ENCODE measurements at regions of chr5 and their contacts with region 1.

Region 1: DNA sequence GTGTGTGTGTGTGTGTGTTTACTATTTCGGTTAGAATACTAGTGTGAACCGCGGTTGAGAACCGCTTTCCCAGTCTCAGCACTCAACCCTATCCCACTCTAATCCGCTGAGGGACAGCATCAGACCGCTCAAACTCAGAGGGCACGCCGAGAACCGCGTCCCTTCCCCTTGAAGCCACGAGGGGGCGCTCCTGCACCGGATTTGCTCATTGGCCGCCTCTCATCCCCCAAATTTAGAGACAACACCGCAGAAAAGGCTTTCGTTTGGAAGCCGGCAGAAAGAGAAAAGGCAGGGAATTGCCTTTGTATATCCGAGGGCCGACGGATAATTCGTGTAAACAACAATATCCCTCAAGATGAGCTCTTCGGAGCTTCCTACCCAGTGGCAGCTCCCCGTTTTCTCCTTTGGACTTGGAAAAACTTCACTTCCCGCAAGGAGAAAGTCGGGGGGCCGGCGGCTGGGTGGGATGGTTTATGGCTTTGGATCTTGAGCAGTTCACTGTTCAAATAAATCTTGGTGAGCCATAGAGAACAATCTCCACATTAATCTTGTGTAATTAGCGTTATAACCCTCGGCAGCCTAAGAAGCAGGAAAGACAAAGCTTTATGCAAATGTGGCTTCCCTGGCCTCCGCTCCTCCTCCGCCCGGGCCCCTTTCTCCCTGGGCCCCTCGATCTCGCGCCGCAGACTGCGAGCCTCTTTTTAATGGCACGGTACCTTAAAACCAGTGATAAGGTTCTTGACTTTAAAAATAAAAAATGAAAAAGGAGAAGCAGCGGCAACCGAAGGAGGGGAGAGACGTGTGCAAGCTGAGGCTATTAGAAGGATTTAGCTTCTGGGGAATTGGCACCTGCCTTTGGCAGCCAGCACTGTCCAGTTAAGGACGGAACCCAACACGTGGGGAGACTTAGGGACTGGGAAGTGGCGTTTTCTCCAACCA is 296.8 kb downstream of the PARP8 start:
- DNase-seq: peak; percentile 69 to 88
- ATAC-seq: peak; percentile 81
- H3K4me3 ChIP-seq: peak overlapping the region; percentile 18 to 53
- H3K27ac ChIP-seq: no peak overlapping the region
- H3K4me1 ChIP-seq: no peaks in the 10 kb centered on the region
- H3K27me3 ChIP-seq: no peaks in the 10 kb centered on the region

Region 2: DNA sequence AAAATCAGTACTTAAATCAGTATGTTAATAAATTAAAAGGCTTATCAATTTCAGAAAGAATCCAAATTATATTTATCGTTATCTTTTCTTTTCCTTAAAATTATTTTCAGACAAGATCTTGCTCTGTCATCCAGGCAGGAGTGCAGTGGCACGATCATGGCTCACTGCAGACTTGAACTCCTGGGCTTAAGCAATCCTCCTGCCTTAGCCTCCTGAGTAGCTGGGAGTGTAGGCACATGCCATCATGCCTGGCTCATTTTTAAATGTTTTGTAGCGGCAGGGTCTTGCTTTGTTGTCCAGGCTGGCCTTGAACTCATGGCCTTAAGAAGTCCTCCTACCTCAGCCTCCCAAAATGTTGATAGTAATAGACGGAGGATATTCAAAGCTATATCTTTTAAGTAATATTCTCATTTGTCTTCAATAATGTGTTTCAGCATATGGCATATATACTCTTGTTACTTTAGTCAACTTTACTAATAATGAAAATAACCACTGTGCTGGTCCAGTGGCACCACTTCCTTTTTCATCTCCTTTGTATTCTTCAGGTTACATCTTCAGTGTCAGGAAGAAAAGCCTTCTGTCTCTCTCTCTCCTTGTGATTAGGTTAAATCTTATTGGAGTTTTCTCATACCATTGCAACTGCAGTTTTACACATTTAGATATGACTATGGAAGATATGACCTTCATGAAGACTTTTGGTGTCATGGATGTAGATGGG is 265.6 kb before region 1 on chr5:
- intact Hi-C with region 1: no loop called
- DNase-seq: no peak
- ATAC-seq: no peak
- H3K4me3 ChIP-seq: no peak overlapping the region
- H3K27ac ChIP-seq: no peak overlapping the region
- H3K4me1 ChIP-seq: no peaks in the 10 kb centered on the region
- H3K27me3 ChIP-seq: no peaks in the 10 kb centered on the region

Region 3: GRCh38 chr5:52007230-52007858 is 1044.1 kb after region 1 on chr5:
- intact Hi-C with region 1: loop called in 1 of 2 experiments (anchors 10 kb)
- DNase-seq: no peak
- ATAC-seq: no peak
- H3K4me3 ChIP-seq: no peak overlapping the region
- H3K27ac ChIP-seq: no peak overlapping the region
- H3K4me1 ChIP-seq: no peaks in the 10 kb centered on the region
- H3K27me3 ChIP-seq: no peaks in the 10 kb centered on the region

Region 4: DNA sequence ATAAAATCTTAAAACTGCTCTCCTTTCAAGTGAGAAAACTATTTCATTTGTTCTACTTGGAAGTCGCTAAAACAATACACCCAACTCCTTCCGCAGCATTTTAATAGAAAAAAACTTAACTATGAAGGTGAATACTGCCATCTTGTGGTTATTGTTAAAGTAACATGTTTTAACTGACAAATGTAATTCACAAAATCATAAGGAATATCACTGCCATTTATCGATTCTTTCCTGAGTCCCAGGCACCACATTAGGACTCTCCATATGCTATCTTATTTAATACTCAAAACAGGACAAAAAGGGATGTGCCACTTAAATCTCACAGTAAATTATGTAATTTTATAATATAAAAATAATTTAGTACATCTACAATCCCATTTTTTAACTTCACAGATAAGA is 1694.0 kb after region 1 on chr5:
- intact Hi-C with region 1: loop called (anchors 5 kb)
- DNase-seq: no peak
- ATAC-seq: peak; percentile 60
- H3K4me3 ChIP-seq: no peak overlapping the region
- H3K27ac ChIP-seq: no peak overlapping the region
- H3K4me1 ChIP-seq: no peaks in the 10 kb centered on the region
- H3K27me3 ChIP-seq: no peaks in the 10 kb centered on the region

Measured in aorta (tissue), 5 donors.